ENCODE measurements at regions of chr15 and their contacts with region 1.

Region 1: GRCh38 chr15:64893481-64894394 is 18.0 kb upstream of the ANKDD1A start:
- DNase-seq: peak; percentile 96
- H3K4me3 Mint-ChIP-seq: peak overlapping the region; percentile 93
- H3K27ac Mint-ChIP-seq: peak overlapping the region; percentile 100
- H3K4me1 Mint-ChIP-seq: peaks cover 75% of the 10 kb centered on the region
- H3K27me3 Mint-ChIP-seq: no peaks in the 10 kb centered on the region

Region 2: GRCh38 chr15:64333986-64334929 is 559.5 kb before region 1 on chr15:
- intact Hi-C with region 1: no loop called
- DNase-seq: no peak
- H3K4me3 Mint-ChIP-seq: no peak overlapping the region
- H3K27ac Mint-ChIP-seq: no peak overlapping the region
- H3K4me1 Mint-ChIP-seq: peaks cover 35% of the 10 kb centered on the region
- H3K27me3 Mint-ChIP-seq: no peaks in the 10 kb centered on the region

Region 3: DNA sequence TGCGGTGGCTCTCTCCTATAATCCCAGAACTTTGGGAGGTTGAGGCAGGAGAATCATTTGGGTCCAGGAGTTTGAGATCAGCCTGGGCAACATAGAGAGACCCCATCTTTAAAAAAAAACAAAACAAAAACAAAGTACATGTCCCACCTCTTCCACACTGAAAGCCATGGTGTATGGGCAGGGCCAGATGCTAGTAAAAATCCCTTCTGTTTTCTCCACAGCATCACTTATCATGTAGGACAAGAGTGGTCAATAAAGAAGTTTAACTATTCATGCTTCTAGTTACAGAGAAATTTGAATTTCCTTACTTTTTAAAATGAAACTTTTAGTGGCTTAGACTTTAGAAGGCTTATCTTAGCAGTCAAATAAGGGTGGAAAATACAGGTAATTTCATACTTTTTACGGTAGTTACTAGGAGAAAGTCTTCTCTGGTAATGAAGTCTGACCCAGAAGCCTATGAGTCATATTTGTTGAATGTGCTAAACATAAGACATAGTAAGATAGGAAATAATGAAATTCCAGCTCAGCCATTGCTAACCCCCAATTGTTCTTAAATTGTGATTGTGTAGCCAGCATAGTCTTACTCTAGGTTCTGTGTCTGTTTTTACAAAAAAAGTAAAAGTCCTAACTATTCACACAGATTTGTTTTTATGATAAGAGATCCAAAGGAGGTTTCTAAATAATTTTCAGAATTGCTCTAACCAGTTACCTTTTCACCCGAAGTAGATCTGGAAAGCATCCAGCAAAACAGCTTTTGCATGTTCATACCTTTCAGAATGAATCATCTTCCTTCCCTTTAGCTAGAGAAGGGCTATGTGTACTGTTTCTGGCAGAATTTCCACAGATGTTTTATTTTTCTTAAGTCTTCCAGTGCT is 449.8 kb before region 1 on chr15:
- intact Hi-C with region 1: loop called (anchors 5 kb)
- DNase-seq: no peak
- H3K4me3 Mint-ChIP-seq: peak overlapping the region; percentile 74
- H3K27ac Mint-ChIP-seq: peak overlapping the region; percentile 94
- H3K4me1 Mint-ChIP-seq: peaks cover 49% of the 10 kb centered on the region
- H3K27me3 Mint-ChIP-seq: no peaks in the 10 kb centered on the region

Region 4: DNA sequence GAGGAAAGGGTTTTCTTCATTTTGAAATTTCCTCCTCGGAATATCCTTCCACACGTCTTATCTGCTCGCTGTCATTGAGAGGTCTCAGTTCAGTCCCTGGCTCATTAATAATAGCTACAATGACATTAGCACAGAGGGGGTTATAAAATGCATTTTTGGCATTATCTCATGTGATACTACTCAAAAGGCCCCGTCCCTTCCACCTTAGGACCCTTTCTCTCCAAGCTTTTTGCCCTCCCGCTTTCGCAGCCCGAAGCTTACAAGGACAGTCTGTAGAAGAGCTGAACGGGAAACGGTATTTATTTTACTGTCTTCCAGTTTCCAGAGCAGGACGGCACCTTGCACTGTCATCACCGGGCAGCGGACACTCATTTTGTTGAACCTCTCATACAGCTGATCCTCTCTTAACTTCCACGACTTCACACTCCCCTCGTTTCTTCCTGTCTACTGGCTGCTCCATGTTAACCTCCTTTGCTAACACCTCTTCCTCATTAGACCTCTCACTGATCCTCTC is 57.7 kb before region 1 on chr15:
- intact Hi-C with region 1: loop called (anchors 1 kb)
- DNase-seq: no peak
- H3K4me3 Mint-ChIP-seq: peak overlapping the region; percentile 57
- H3K27ac Mint-ChIP-seq: peak overlapping the region; percentile 80
- H3K4me1 Mint-ChIP-seq: peaks cover 41% of the 10 kb centered on the region
- H3K27me3 Mint-ChIP-seq: no peaks in the 10 kb centered on the region

Region 5: GRCh38 chr15:64911311-64912191 is 17.8 kb after region 1 on chr15 and contains the start of gene ANKDD1A:
- intact Hi-C with region 1: loop called (anchors 2 kb)
- DNase-seq: peak; percentile 63
- H3K4me3 Mint-ChIP-seq: peak within 1 kb of the TSS; percentile 81
- H3K27ac Mint-ChIP-seq: no peak within 1 kb of the TSS
- H3K4me1 Mint-ChIP-seq: peaks cover 20% of the 10 kb centered on the region
- H3K27me3 Mint-ChIP-seq: peaks cover 21% of the 10 kb centered on the region
- total RNA-seq, gene ANKDD1A: 0.93 and 1.3 TPM in 2 replicates

Region 6: DNA sequence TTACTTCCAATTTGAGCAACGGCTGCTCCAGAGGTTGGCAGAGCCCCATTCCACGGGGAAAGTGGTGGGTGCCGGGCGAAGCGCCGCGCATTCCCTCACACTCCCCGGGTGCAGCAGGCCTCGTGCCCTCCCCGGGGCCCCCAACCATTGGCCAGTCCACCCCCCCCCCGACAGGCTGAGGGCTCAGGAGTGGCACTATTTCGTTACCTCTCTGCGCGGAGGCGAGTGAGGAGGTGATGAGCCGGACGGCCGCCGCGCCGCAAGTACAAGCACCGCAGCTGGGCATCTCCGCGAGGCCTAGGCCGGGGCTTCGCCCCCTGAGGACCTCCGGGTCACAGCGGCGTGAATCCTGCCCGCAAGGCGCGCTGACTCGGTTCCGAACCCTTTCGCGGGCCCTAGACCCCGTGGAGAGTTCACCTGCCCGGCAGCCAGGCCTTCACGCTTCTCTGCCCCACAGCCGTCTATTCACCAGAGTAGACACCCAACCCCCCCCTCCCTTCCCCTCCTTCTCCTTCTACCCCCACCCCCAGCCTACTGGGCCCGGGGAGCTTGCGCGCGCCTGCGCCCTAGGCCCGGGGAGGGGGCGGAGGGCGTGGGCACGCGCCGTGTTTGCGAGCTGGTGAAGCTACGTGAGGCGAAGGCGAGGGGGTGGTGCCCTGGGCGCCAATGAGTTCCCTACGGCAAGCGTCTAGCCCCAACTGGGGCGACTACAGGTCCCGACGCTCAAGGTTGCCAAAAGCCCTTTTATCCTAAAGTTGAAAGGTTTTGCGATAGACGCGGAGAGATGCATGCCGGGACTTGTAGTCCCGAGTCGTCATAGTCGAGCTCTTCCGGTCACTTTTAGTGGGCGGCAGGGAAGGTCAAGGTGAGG is 291.4 kb after region 1 on chr15 and contains the start of gene CLPX:
- intact Hi-C with region 1: loop called (anchors 5 kb)
- DNase-seq: peak; percentile 86
- H3K4me3 Mint-ChIP-seq: peak within 1 kb of the TSS; percentile 98
- H3K27ac Mint-ChIP-seq: peak within 1 kb of the TSS; percentile 92
- H3K4me1 Mint-ChIP-seq: peaks cover 24% of the 10 kb centered on the region
- H3K27me3 Mint-ChIP-seq: no peaks in the 10 kb centered on the region
- total RNA-seq, gene CLPX: 55.7 and 57.2 TPM in 2 replicates

Region 7: GRCh38 chr15:65869127-65869953 is 975.6 kb after region 1 on chr15 and contains the start of gene RAB11A:
- intact Hi-C with region 1: loop called (anchors 5 kb)
- DNase-seq: peak; percentile 94
- H3K4me3 Mint-ChIP-seq: peak within 1 kb of the TSS; percentile 99
- H3K27ac Mint-ChIP-seq: peak within 1 kb of the TSS; percentile 93
- H3K4me1 Mint-ChIP-seq: peaks cover 31% of the 10 kb centered on the region
- H3K27me3 Mint-ChIP-seq: peaks cover 4% of the 10 kb centered on the region
- total RNA-seq, gene RAB11A: 161 and 171 TPM in 2 replicates

Measured in activated T-helper 1 cell treated with anti-CD3 and anti-CD28 coated beads, Interleukin-12 subunit alpha, Interleukin-12 subunit beta, Interleukin-2, Interleukin-4 antibody, amounts not matched to agents 30 ng/mL and 10 ng/mL and 1 ng/mL, durations not matched to agents 14 hours and 24 hours and 36 hours (primary cell).